ENCODE measurements at regions of chr11 and their contacts with region 1.

Region 1: DNA sequence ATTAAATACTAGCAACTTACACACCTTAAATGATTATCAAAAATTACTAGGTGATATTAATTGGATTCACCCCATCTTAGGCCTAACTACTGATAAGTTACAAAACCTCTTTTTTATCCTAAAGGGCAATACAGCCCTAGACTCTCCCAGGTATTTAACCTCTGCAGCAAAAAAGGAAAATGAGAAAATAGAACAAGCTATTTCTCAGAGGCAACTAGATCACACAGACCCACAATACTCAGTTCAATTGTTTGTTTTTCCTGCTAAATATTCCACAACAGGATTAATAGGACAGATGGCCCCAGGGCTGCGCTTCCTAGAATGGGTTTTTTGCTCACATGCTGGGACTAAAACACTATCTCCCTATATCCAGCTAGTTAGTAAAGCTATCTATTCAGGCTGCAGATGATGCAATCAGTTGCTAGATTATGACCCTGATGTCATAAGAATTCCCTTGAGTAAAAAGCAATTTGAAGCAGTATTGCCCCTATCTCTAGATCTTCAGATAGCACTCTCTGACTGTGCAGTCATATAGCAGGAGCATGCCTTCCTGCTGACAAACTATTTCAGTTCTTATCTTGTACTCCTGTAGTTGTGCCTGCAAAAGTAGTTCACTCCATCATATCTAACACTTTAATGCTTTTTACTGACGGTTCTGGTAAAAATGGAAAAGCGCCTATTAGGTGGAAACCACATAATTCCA is 1595.5 kb upstream of the TENM4 start:
- DNase-seq: no peak
- ATAC-seq: peak; percentile 61
- H3K4me3 ChIP-seq: no peak overlapping the region
- H3K4me1 ChIP-seq: peaks cover 5% of the 10 kb centered on the region
- CTCF ChIP-seq: no peak

Region 2: DNA sequence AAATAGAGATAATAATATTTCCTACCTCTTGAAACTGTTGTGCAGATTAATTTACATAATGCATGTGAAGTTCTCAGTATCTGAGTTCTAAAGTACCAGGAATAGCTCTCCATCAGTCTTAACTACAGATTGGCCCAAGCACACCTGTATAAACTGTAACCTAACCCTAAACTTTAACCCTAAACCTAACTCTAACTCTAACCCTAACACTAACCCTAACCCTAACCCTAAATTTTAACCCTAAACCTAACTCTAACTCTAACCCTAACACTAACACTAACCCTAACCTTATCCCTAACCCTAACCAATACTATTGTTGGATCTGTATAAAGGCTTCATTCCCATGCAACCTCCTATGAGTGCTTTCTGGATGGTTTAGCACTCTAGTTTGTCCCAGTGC is 149.6 kb before region 1 on chr11:
- intact Hi-C with region 1: no loop called
- DNase-seq: no peak
- ATAC-seq: no peak
- H3K4me3 ChIP-seq: no peak overlapping the region
- H3K4me1 ChIP-seq: no peaks in the 10 kb centered on the region
- CTCF ChIP-seq: no peak

Region 3: GRCh38 chr11:80993536-80993935 is 42.8 kb before region 1 on chr11:
- intact Hi-C with region 1: no loop called
- DNase-seq: no peak
- ATAC-seq: no peak
- H3K4me3 ChIP-seq: no peak overlapping the region
- H3K4me1 ChIP-seq: no peaks in the 10 kb centered on the region
- CTCF ChIP-seq: no peak

Region 4: GRCh38 chr11:81089242-81089641 is 52.9 kb after region 1 on chr11:
- intact Hi-C with region 1: loop called in 1 of 2 experiments (anchors 5 kb)
- DNase-seq: no peak
- ATAC-seq: no peak
- H3K4me3 ChIP-seq: no peak overlapping the region
- H3K4me1 ChIP-seq: no peaks in the 10 kb centered on the region
- CTCF ChIP-seq: no peak